ENCODE measurements at regions of chr7 and their contacts with region 1.

Region 1: GRCh38 chr7:155804897-155805825 is 7.1 kb downstream of the SHH start:
- DNase-seq: no peak
- H3K4me3 ChIP-seq: no peak overlapping the region
- CTCF ChIP-seq: no peak
- POLR2A ChIP-seq: no peak

Region 2: DNA sequence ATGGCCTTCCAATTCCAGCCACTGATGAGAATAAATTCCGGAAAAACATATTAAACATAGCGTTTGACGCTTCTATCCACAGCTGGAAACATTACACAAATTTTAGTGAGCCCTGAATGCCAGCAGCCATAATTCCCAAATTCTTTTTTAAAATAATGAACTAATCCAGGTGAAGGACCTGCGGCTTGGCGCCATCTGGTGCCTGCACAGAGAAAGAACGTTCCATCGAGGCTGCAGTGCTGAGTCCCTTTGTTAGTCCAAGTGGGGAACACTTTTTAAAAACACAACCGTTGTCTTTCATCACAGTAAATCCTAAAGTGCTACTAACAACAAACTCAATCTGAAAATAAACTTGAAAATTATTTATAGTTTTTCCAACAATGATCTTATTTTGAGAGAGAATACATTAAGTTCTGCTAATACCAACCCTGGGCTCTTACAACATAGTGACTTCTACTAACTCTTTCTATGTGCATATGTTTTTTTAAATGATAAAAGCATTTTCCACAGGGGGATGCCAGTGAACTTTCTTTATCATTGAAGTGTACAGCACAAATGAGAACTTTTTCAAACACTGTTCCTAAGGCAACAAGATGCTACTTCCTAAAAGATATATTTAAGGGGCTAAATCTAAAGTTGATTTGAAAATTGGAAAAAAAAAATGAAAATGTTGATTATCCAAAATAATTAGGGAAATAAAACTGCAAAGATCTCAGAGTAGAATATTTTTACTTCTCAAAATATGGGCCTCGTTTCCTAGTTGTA is 668.5 kb after region 1 on chr7:
- intact Hi-C with region 1: loop called (anchors 10 kb)
- DNase-seq: peak in 1 of 2 donors; percentile 63
- H3K4me3 ChIP-seq: no peak overlapping the region
- CTCF ChIP-seq: no peak
- POLR2A ChIP-seq: no peak